Activated B cell treated with CpG ODN at 0.5 μM for 24 hours (primary cell): ENCODE measurements at regions of chr1 and their contacts with region 1.

Region 1: GRCh38 chr1:20212685-20213331 is 26.5 kb upstream of the PLA2G2C start:
- DNase-seq: peak; percentile 58
- ATAC-seq: peak; percentile 91
- H3K4me3 Mint-ChIP-seq: peak overlapping the region; percentile 7
- H3K27ac Mint-ChIP-seq: no peak overlapping the region
- H3K4me1 Mint-ChIP-seq: peaks cover 14% of the 10 kb centered on the region
- H3K27me3 Mint-ChIP-seq: peaks cover 23% of the 10 kb centered on the region
- CTCF ChIP-seq: peak; percentile 61

Region 2: GRCh38 chr1:20430355-20431175 is 217.8 kb after region 1 on chr1:
- CTCF ChIA-PET with region 1: no interaction called
- POLR2A ChIA-PET with region 1: no interaction called
- intact Hi-C with region 1: loop called (anchors 1 kb)
- DNase-seq: no peak
- ATAC-seq: no peak
- H3K4me3 Mint-ChIP-seq: no peak overlapping the region
- H3K27ac Mint-ChIP-seq: no peak overlapping the region
- H3K4me1 Mint-ChIP-seq: peaks cover 3% of the 10 kb centered on the region
- H3K27me3 Mint-ChIP-seq: peaks cover 31% of the 10 kb centered on the region
- CTCF ChIP-seq: no peak

Region 3: DNA sequence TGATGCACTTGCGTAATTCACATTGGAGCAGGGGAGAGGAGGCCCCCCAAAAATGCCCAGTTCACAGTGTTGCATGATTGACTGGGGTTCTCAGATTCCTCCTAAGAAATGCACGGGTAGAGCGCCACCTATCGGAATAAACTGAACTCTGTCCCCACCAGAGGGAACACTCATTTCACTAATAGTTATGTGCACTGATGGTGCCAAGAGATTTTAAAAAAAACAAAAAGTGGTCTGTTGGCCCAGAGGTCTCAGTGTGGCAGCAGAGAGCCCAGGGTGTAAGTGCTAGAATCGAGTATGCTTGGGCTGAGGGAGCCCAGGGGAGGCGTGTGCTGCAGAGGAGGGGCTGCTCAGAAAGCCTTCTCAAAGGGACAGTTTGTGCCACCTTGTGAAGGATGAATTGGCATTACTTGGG is 427.4 kb after region 1 on chr1:
- CTCF ChIA-PET with region 1: no interaction called
- POLR2A ChIA-PET with region 1: no interaction called
- intact Hi-C with region 1: loop called (anchors 2 kb)
- DNase-seq: no peak
- ATAC-seq: peak; percentile 72
- H3K4me3 Mint-ChIP-seq: no peak overlapping the region
- H3K27ac Mint-ChIP-seq: no peak overlapping the region
- H3K4me1 Mint-ChIP-seq: peaks cover 3% of the 10 kb centered on the region
- H3K27me3 Mint-ChIP-seq: no peaks in the 10 kb centered on the region
- CTCF ChIP-seq: peak; percentile 42

Region 4: DNA sequence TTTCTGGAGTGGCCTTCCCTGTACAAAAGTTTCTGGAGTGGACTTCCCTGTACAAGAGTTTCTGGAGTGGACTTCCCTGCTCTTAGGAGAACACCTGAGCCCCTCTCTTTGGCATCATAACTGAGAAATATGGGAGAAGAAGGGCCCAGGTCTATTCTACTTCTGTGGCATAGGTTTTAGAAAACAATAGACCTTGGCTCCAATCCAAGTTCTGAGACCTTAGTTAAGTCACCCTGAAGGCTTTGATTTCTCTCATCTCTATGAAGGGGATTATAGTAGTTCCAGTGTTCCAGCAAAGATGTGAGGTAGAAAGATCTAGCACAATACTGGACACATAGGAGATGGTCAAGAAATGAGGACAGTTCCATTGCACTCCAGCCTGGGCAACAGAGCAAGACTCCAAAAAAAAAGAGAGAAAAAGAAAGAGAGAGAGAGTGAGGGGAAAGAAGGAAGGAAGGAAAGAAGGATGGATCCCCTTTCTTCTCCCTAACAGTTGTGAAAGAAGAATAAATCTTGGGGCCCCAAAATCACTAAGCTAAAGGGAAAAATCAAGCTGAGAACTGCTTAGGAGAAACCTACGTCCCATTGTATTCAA is 977.2 kb after region 1 on chr1:
- CTCF ChIA-PET with region 1: no interaction called
- POLR2A ChIA-PET with region 1: no interaction called
- intact Hi-C with region 1: loop called (anchors 10 kb)
- DNase-seq: no peak
- ATAC-seq: no peak
- H3K4me3 Mint-ChIP-seq: no peak overlapping the region
- H3K27ac Mint-ChIP-seq: no peak overlapping the region
- H3K4me1 Mint-ChIP-seq: peaks cover 5% of the 10 kb centered on the region
- H3K27me3 Mint-ChIP-seq: peaks cover 5% of the 10 kb centered on the region
- CTCF ChIP-seq: no peak